ENCODE measurements at regions of chr11 and their contacts with region 1.

Region 1: GRCh38 chr11:66883016-66883968 is 26.4 kb downstream of the LRFN4 start:
- DNase-seq: peak; percentile 85 to 92
- ATAC-seq: peak; percentile 47
- H3K4me3 ChIP-seq: peak overlapping the region in 1 of 2 donors; percentile 9
- H3K27ac ChIP-seq: no peak overlapping the region
- H3K4me1 ChIP-seq: no peaks in the 10 kb centered on the region
- H3K27me3 ChIP-seq: no peaks in the 10 kb centered on the region

Region 2: GRCh38 chr11:66694732-66695207 is 188.5 kb before region 1 on chr11:
- intact Hi-C with region 1: loop called in 1 of 2 experiments (anchors 5 kb)
- DNase-seq: peak; percentile 93 to 94
- ATAC-seq: peak; percentile 87
- H3K4me3 ChIP-seq: no peak overlapping the region
- H3K27ac ChIP-seq: no peak overlapping the region
- H3K4me1 ChIP-seq: no peaks in the 10 kb centered on the region
- H3K27me3 ChIP-seq: no peaks in the 10 kb centered on the region

Region 3: DNA sequence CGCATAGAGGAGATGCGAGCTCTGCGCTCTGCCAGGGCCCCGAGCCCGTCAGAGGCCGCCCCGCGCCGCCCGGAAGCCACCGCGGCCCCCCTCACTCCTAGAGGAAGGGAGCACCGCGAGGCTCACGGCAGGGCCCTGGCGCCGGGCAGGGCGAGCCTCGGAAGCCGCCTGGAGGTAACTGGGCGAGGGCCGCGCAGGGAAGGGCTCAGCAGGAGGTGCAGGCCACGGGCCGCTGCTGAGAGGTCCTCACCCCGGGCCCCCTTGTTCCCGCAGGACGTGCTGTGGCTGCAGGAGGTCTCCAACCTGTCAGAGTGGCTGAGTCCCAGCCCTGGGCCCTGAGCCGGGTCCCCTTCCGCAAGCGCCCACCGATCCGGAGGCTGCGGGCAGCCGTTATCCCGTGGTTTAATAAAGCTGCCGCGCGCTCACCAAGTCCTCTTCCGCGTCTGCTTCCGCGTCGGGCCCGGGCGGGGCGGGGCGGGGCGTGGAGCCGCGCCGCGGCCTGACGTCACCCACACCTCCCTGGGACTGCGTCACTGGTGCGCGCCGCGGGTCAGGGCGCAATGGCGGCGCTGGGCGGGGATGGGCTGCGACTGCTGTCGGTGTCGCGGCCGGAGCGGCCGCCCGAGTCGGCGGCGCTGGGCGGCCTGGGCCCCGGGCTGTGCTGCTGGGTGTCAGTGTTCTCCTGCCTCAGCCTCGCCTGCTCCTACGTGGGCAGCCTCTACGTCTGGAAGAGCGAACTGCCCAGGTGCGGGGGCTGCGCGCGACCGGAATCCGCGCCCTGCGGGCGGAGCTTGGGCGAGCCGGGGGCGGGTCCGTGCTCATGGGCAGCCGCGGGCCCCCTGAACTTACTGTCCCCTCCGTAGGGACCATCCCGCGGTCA is 40.2 kb before region 1 on chr11 and contains the start of gene RCE1:
- intact Hi-C with region 1: loop called in 1 of 2 experiments (anchors 5 kb)
- DNase-seq: peak; percentile 92 to 96
- ATAC-seq: peak; percentile 96
- H3K4me3 ChIP-seq: peak within 1 kb of the TSS; percentile 87 to 92
- H3K27ac ChIP-seq: peak within 1 kb of the TSS; percentile 84 to 92
- H3K4me1 ChIP-seq: no peaks in the 10 kb centered on the region
- H3K27me3 ChIP-seq: no peaks in the 10 kb centered on the region
- total RNA-seq, gene RCE1: 11.7 to 14.6 TPM

Measured in aorta (tissue), 5 donors.